Endothelial cell of umbilical vein (primary cell): ENCODE measurements at regions of chr9 and their contacts with region 1.

Region 1: GRCh38 chr9:35161713-35162604 is at the start of gene UNC13B:
- DNase-seq: peak; percentile 96
- H3K4me3 ChIP-seq: peak within 1 kb of the TSS; percentile 86 to 95 (median 94)
- H3K27ac ChIP-seq: peak within 1 kb of the TSS; percentile 70
- H3K4me1 ChIP-seq: peaks cover 34% of the 10 kb centered on the region
- H3K27me3 ChIP-seq: no peaks in the 10 kb centered on the region
- CTCF ChIP-seq: no peak
- POLR2A ChIP-seq: peak; percentile 96
- total RNA-seq, gene UNC13B: 44.2 and 46.2 TPM in 2 replicates

Region 2: GRCh38 chr9:35179347-35180287 is 17.7 kb after region 1 on chr9:
- CTCF ChIA-PET with region 1: no interaction called
- POLR2A ChIA-PET with region 1: no interaction called
- dilution Hi-C with region 1: no loop called
- intact Hi-C with region 1: no loop called
- DNase-seq: no peak
- H3K4me3 ChIP-seq: no peak overlapping the region
- H3K27ac ChIP-seq: no peak overlapping the region
- H3K4me1 ChIP-seq: no peaks in the 10 kb centered on the region
- H3K27me3 ChIP-seq: no peaks in the 10 kb centered on the region
- CTCF ChIP-seq: no peak
- POLR2A ChIP-seq: no peak

Region 3: DNA sequence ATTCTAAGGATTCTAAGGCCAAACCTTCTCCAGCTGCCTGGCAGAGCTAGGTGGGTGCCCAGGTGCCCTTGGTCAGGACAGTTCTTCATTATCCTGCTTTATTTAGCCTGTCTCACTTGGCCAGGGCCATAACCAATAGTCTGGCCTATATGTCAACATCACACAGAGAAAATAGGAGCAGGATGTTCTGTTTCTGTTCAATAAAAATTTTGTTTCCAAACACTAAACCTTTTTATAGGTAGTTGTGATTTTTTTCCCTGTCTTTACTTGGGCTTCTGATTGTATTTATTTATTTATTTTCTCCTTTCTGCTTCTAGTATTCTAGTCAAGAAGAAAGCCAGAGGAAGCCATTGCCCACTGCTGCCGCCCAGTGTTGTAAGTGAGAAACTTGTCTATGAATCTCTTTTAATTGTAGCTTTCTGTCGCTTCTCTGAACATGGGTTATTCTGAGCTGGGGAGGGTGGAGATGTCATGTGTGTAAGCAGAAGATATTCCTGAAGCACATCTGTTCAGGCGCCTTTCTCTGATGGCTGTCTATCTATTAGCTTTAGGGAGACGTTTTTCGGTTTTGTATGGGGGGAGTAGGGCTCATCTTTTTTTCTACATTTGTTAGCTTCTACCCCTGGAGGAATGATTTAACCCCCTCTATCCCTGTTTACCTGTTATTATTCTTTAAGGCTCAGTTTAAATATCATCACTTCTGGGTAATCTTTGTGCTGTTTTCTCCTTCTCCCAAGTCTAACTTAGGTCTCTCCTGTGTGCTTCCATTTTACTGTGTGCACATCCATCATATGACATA is 96.9 kb after region 1 on chr9:
- CTCF ChIA-PET with region 1: interaction called, 20 read pairs
- POLR2A ChIA-PET with region 1: interaction called, 3 read pairs
- dilution Hi-C with region 1: no loop called
- intact Hi-C with region 1: loop called (anchors 2 kb)
- DNase-seq: peak; percentile 82
- H3K4me3 ChIP-seq: no peak overlapping the region
- H3K27ac ChIP-seq: no peak overlapping the region
- H3K4me1 ChIP-seq: no peaks in the 10 kb centered on the region
- H3K27me3 ChIP-seq: no peaks in the 10 kb centered on the region
- CTCF ChIP-seq: peak; percentile 55 to 67
- POLR2A ChIP-seq: no peak

Region 4: DNA sequence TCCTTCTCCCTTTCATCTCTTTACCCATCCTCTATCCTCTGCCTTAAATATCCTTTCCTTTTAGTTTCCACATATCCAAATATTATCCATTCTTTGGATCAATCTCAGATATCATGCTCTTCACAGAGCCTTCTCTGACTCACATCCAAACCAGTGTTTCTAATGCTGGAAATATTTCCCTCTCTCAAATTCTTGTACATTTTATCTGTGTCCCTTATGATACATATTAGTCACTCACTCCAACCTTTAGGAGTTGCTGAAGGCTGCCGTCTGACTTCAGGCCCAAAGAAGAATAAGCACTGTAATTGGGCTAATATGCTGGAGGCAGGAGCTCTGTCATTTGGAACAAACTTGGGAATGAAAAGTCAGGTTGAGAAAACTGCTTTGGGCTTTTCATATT is 171.6 kb after region 1 on chr9:
- CTCF ChIA-PET with region 1: interaction called, 4 read pairs
- POLR2A ChIA-PET with region 1: no interaction called
- dilution Hi-C with region 1: no loop called
- intact Hi-C with region 1: loop called (anchors 10 kb)
- DNase-seq: peak; percentile 59
- H3K4me3 ChIP-seq: no peak overlapping the region
- H3K27ac ChIP-seq: peak overlapping the region; percentile 93
- H3K4me1 ChIP-seq: peaks cover 37% of the 10 kb centered on the region
- H3K27me3 ChIP-seq: no peaks in the 10 kb centered on the region
- CTCF ChIP-seq: no peak
- POLR2A ChIP-seq: no peak